CD4-positive, alpha-beta memory T cell (primary cell): ENCODE measurements at regions of chr17 and their contacts with region 1.

Region 1: DNA sequence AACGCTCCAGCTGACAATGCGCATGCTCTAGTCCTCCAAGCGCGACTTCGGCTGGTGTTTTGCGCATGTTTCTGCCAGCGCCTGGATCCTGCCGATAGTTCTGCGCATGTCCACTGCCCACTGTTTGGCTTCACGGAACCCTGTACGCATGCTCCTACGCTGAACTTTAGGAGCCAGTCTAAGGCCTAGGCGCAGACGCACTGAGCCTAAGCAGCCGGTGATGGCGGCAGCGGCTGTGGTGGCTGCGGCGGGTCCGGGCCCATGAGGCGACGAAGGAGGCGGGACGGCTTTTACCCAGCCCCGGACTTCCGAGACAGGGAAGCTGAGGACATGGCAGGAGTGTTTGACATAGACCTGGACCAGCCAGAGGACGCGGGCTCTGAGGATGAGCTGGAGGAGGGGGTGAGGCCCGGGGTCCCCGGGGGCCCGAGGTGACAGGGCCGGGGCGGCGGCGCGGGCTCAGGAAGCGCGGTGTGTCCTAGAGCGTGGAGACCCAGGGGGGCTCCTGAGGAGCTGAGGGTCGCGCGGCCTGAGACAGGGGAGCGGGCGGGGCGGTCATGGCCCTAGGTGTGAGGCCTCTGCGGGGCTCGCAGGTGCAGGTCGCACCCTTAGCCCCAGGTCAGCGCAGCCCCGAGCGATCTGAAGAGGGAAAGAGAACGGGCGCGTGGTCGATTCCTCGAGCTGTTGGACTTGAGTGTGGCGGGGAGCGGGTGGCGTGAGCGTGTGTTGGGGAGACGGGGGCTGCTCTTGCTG is at the starts of genes RPS6KB1 and TUBD1:
- DNase-seq: peak; percentile 96 to 99 (median 98)
- H3K4me3 ChIP-seq: peak within 1 kb of the TSS; percentile 68 to 83
- H3K4me3 Mint-ChIP-seq: peak within 1 kb of the TSS; percentile 99 to 100 (median 100)
- H3K27ac ChIP-seq: peak within 1 kb of the TSS; percentile 96
- H3K27ac Mint-ChIP-seq: peak within 1 kb of the TSS; percentile 93 to 100 (median 99)
- H3K4me1 ChIP-seq: peaks cover 51% of the 10 kb centered on the region
- H3K4me1 Mint-ChIP-seq: peaks cover 35 to 67% (median 50%) of the 10 kb centered on the region in 4 donors
- H3K27me3 ChIP-seq: no peaks in the 10 kb centered on the region
- H3K27me3 Mint-ChIP-seq: no peaks in the 10 kb centered on the region
- total RNA-seq, gene RPS6KB1: 57.2 to 67.4 TPM
- total RNA-seq, gene TUBD1: 42.4 to 44.0 TPM

Region 2: GRCh38 chr17:59707114-59707970 is 185.8 kb before region 1 on chr17 and contains the starts of genes PTRH2 and VMP1:
- CTCF ChIA-PET with region 1: no interaction called
- POLR2A ChIA-PET with region 1: interaction called, 10 read pairs
- intact Hi-C with region 1: loop called (anchors 2 kb)
- DNase-seq: peak; percentile 85 to 98 (median 89)
- H3K4me3 ChIP-seq: peak within 1 kb of the TSS; percentile 97 to 99
- H3K4me3 Mint-ChIP-seq: peak within 1 kb of the TSS; percentile 97 to 100 (median 98)
- H3K27ac ChIP-seq: peak within 1 kb of the TSS; percentile 98
- H3K27ac Mint-ChIP-seq: peak within 1 kb of the TSS; percentile 97 to 100 (median 99)
- H3K4me1 ChIP-seq: peaks cover 57% of the 10 kb centered on the region
- H3K4me1 Mint-ChIP-seq: peaks cover 41 to 81% (median 54%) of the 10 kb centered on the region in 4 donors
- H3K27me3 ChIP-seq: no peaks in the 10 kb centered on the region
- H3K27me3 Mint-ChIP-seq: no peaks in the 10 kb centered on the region
- total RNA-seq, gene PTRH2: 17.3 to 17.8 TPM
- total RNA-seq, gene VMP1: 106 to 113 TPM

Region 3: DNA sequence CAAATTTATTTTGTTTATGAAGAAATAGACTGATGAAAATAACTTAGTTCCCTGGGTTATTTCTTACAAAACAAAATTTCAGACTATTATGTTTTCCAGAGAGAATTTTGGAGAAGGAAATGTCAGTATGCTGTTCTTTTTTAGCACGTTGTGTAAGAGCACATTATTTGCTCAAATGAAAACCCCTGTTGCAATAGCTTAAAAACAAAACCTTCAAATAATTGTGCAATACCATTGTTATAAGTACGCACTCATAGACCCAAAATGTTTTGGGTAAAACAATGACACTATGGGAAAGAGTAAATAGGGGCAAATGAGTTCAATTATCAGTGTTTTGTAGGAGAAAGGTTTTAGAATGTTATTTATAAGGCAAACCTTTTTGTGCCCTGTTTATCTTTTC is 167.4 kb before region 1 on chr17:
- CTCF ChIA-PET with region 1: no interaction called
- POLR2A ChIA-PET with region 1: no interaction called
- intact Hi-C with region 1: no loop called
- DNase-seq: no peak
- H3K4me3 ChIP-seq: no peak overlapping the region
- H3K4me3 Mint-ChIP-seq: no peak overlapping the region
- H3K27ac ChIP-seq: no peak overlapping the region
- H3K27ac Mint-ChIP-seq: no peak overlapping the region
- H3K4me1 ChIP-seq: peaks cover 22% of the 10 kb centered on the region
- H3K4me1 Mint-ChIP-seq: peaks cover 26 to 53% (median 35%) of the 10 kb centered on the region in 4 donors
- H3K27me3 ChIP-seq: no peaks in the 10 kb centered on the region
- H3K27me3 Mint-ChIP-seq: no peaks in the 10 kb centered on the region

Region 4: DNA sequence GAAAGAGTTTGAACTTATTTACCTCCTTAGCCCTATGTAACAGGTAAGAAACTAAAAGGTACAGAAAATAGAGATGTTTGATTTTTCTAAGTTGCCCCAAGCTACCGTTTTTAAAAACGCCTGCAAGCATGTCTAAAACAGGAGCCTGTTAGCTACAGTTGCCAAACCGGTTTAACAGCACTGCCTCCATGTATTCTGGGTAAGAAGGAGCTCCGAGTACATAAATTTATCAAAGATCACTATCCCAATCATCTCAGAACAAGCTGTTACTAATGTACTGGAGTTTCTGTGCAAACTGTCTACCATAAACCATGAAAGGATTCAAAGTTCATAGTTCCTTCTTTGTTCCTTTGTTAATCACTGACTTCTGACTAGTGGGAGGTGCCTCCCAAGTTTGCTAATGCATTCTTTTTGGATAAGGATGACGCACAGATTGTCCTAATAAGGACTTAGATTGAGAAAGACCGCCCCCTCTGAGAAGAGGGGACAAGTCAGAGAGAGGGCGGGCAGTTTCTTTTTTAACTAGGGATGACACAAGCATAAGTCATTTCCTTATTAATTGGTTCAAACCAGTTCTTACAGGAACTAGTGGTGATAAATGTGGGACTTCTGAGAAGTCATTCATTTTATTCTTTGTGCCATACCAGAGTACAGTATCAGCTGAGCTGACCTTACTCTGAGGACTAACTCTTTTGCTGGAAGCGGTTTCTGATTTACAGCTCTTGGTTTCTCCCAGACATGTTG is 55.6 kb before region 1 on chr17:
- CTCF ChIA-PET with region 1: no interaction called
- POLR2A ChIA-PET with region 1: interaction called, 29 read pairs
- intact Hi-C with region 1: loop called (anchors 2 kb)
- DNase-seq: peak; percentile 84 to 95 (median 91)
- H3K4me3 ChIP-seq: peak overlapping the region; percentile 78 to 94
- H3K4me3 Mint-ChIP-seq: peak overlapping the region; percentile 94 to 100 (median 97)
- H3K27ac ChIP-seq: peak overlapping the region; percentile 93
- H3K27ac Mint-ChIP-seq: peak overlapping the region; percentile 96 to 99 (median 98)
- H3K4me1 ChIP-seq: peaks cover 19% of the 10 kb centered on the region
- H3K4me1 Mint-ChIP-seq: peaks cover 23 to 59% (median 35%) of the 10 kb centered on the region in 4 donors
- H3K27me3 ChIP-seq: no peaks in the 10 kb centered on the region
- H3K27me3 Mint-ChIP-seq: no peaks in the 10 kb centered on the region

Region 5: DNA sequence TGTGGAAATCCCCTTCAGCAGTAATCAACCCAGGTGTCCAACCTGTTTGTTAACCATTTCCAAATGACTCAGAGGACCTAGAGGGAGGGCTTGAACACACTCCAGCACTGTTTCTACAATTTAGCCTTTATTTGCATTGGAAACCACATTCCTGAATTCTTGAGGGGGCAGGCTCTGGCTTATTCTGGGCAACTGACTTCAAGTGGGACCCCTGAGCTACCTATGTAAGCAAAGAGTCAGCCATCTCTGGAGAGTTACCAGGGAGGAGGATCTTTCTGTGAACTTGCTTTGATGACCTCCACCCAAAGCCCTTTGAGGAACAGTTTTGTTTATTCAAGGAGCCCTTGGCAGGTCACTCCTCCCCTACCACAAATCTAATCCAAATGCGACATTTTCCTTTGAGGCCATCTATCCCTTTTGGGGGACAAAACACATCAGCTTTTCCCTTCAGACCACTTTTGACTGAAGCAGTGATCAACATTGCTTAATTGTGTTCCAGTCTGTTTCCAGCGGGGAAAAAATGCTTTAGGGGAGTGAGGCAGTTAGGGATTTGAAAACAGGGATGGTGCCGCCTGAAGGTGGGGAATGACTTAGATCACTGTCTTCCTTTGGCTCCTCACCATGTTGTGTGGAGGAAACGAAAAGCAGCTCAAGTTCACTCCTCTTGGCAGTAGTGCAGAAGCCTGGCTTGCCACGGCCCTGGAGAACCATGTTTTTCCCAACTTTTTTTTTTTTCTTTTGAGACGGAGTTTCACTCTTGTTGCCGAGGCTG is 46.5 kb before region 1 on chr17:
- CTCF ChIA-PET with region 1: no interaction called
- POLR2A ChIA-PET with region 1: interaction called, 12 read pairs
- intact Hi-C with region 1: no loop called
- DNase-seq: peak in 4 of 5 donors; percentile 28 to 74 (median 44)
- H3K4me3 ChIP-seq: peak overlapping the region in 1 of 2 donors; percentile 1
- H3K4me3 Mint-ChIP-seq: peak overlapping the region in 7 of 8 donors; percentile 21 to 70 (median 39)
- H3K27ac ChIP-seq: peak overlapping the region; percentile 62
- H3K27ac Mint-ChIP-seq: peak overlapping the region; percentile 82 to 90 (median 86)
- H3K4me1 ChIP-seq: peaks cover 74% of the 10 kb centered on the region
- H3K4me1 Mint-ChIP-seq: peaks cover 43 to 73% (median 60%) of the 10 kb centered on the region in 4 donors
- H3K27me3 ChIP-seq: no peaks in the 10 kb centered on the region
- H3K27me3 Mint-ChIP-seq: no peaks in the 10 kb centered on the region

Region 6: DNA sequence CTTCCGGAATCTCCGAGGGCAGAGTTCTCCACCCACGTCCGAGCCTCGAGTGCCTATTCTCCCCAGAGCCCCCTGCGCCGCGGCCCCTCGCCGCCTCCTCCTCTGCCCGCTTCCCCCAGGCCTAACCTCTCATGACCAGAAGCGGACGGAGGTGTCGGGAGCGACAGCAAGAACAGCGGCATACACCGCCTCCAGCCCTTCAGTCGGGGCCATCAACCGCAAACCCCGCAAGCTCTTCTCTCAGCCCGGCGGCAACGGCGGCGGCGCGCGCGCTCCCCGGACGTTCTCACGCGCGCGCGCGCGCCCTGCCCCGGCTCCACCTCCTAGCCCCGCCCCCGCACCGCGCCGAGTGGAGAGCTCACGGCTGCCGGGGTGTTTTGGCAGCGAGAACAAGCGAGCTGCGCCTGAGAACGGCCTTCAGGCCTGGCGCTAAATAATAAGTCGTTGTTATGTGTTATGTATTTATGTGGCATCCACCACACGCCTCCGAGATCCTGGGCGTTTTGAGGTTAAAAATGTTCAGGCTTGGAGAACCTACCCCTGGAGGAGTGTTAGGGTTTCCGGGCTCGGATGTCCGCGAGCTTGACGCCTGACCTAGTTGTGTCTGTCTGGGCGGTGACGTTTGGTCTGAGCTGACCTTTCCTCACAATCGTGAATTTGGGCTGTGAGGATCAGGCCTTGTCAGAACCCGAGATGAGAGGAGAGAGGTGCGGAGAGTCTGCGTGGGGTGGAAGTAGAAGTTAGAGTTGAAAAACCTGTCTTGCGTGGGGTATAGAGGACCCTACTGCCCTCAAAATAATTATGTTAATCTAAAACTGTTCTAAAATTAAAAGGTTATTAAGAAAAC is 71.6 kb after region 1 on chr17 and contains the start of gene RNFT1:
- CTCF ChIA-PET with region 1: no interaction called
- POLR2A ChIA-PET with region 1: interaction called, 27 read pairs
- intact Hi-C with region 1: loop called (anchors 1 kb)
- DNase-seq: peak; percentile 85 to 87 (median 87)
- H3K4me3 ChIP-seq: peak within 1 kb of the TSS; percentile 80 to 90
- H3K4me3 Mint-ChIP-seq: peak within 1 kb of the TSS; percentile 93 to 98 (median 94)
- H3K27ac ChIP-seq: peak within 1 kb of the TSS; percentile 83
- H3K27ac Mint-ChIP-seq: peak within 1 kb of the TSS; percentile 90 to 99 (median 99)
- H3K4me1 ChIP-seq: peaks cover 25% of the 10 kb centered on the region
- H3K4me1 Mint-ChIP-seq: peaks cover 12 to 26% (median 18%) of the 10 kb centered on the region in 4 donors
- H3K27me3 ChIP-seq: no peaks in the 10 kb centered on the region
- H3K27me3 Mint-ChIP-seq: no peaks in the 10 kb centered on the region
- total RNA-seq, gene RNFT1: 36.6 to 40.3 TPM